ENCODE measurements at regions of chr2 and their contacts with region 1.

Region 1: DNA sequence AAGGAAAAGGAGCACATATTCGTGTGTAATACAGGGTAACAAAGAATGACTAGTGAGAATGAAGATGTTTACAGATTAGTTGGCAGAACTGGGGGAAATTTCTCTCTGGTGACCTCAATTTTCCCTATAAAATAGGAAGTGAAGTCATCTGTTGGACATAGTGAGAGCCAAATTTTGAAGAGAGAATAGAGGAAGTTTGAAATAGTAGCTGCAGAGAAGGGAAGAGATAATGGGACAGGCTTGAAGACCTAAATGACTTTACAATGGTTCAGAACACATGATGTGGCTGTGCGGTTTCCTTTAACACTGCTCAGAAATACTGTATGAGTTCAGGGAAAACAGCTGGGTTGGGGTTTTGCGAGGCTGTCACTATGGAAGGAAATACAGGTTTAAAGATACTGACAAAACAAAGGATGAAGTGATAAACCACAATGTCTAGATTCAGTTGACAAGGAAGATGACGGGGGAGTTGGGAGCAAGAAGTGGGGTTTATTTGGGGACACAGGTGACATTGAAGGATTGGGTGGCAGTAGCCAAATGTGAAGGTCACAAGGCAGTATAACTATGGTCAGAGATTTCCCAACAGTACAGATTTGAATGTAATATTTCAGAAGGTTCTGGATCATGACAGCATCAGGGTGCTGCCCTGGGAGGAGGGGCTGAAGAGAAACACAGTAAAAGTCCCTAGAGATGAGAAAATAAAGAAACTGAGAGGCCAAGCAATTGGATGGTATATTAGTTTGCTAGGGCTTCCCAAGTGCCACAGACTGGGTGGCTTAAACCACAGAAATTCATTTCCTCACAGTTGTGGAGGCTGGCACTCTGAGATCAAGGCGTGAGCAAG is 82.6 kb upstream of the TANK start:
- DNase-seq: peak; percentile 84
- H3K4me3 Mint-ChIP-seq: peak overlapping the region; percentile 6
- H3K27ac Mint-ChIP-seq: peak overlapping the region; percentile 85
- H3K4me1 Mint-ChIP-seq: peaks cover 42% of the 10 kb centered on the region
- H3K27me3 Mint-ChIP-seq: no peaks in the 10 kb centered on the region

Region 2: DNA sequence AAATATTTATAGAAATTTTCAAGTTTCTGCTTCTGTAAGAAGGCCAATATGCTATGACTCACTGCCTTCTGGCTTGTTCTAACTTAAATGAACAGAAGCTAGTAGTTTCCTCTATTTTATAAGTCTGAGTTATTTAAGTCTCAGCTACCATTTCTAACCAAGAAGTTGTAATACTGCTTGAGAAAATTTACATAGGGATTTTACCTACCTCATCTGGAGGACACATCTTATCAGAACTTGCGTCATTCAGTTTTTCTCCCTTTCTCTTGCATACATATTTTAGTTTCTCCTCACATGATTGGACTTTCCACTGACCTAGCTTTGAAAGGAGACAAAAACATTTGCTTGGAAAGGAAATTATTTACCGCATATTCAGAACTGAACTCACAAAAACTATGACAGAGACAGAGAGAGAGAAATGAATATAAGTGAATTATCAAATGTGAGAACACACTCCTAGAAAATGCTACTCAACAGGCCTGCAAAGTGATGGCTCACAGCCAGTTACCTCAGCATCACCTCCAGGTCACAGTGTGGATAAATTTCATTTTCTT is 1198.5 kb before region 1 on chr2:
- CTCF ChIA-PET with region 1: no interaction called
- POLR2A ChIA-PET with region 1: no interaction called
- intact Hi-C with region 1: loop called (anchors 1 kb)
- DNase-seq: peak; percentile 72
- H3K4me3 Mint-ChIP-seq: no peak overlapping the region
- H3K27ac Mint-ChIP-seq: peak overlapping the region; percentile 88
- H3K4me1 Mint-ChIP-seq: peaks cover 61% of the 10 kb centered on the region
- H3K27me3 Mint-ChIP-seq: no peaks in the 10 kb centered on the region

Region 3: DNA sequence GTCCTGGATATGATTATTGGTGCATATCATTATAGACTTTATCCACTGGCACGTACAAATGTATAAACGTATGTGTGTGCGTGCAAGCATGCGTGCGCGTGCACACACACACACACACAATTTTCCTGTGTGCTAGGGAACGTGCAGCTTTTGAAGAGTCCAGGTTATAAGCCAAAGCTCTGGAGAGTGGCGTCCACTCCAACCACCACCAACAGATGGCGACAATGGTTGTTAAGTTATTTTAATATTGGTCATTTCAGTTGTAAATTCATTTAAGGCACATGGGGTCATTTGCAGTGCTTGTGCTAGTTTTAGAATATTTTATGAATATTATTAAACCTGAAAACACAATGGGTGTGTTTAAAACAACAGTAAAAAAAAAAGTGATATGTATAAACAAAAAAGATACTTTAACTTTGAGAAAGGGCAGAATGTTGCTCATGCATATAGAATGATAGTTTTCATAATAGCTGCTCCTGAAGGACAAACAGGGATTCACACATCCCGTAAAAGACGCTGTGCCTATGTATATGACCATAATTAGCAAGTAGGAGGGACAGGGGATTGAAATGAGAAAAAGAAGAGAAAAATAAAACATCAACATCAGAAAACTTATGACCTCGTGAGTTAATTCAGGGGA is 753.3 kb before region 1 on chr2:
- CTCF ChIA-PET with region 1: no interaction called
- POLR2A ChIA-PET with region 1: no interaction called
- intact Hi-C with region 1: loop called (anchors 1 kb)
- DNase-seq: peak; percentile 62
- H3K4me3 Mint-ChIP-seq: no peak overlapping the region
- H3K27ac Mint-ChIP-seq: no peak overlapping the region
- H3K4me1 Mint-ChIP-seq: peaks cover 80% of the 10 kb centered on the region
- H3K27me3 Mint-ChIP-seq: no peaks in the 10 kb centered on the region

Region 4: DNA sequence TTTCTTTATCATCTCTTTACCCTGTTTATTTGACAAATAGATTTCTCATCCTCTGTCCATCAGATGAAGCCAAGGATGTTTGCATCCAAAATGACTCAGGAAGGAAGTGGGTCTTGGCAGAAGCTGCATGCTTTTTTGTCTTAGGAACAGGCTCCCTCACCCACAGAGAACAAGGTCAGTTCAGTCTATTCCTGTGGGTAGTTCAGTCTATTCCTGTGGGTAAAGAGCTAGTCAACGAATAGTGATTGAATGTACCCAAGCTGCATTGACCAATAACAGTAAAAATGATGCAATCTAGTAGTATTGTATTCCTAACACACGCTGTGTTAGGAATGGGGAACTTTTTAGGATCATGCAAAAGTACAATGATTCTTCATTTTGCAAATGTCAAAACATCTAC is 208.2 kb before region 1 on chr2:
- CTCF ChIA-PET with region 1: no interaction called
- POLR2A ChIA-PET with region 1: no interaction called
- intact Hi-C with region 1: no loop called
- DNase-seq: no peak
- H3K4me3 Mint-ChIP-seq: no peak overlapping the region
- H3K27ac Mint-ChIP-seq: no peak overlapping the region
- H3K4me1 Mint-ChIP-seq: no peaks in the 10 kb centered on the region
- H3K27me3 Mint-ChIP-seq: no peaks in the 10 kb centered on the region

Region 5: GRCh38 chr2:161090411-161090810 is 12.8 kb after region 1 on chr2:
- CTCF ChIA-PET with region 1: interaction called, 4 read pairs
- POLR2A ChIA-PET with region 1: interaction called, 3 read pairs
- intact Hi-C with region 1: loop called (anchors 1 kb)
- DNase-seq: peak; percentile 57
- H3K4me3 Mint-ChIP-seq: peak overlapping the region; percentile 48
- H3K27ac Mint-ChIP-seq: peak overlapping the region; percentile 54
- H3K4me1 Mint-ChIP-seq: peaks cover 35% of the 10 kb centered on the region
- H3K27me3 Mint-ChIP-seq: no peaks in the 10 kb centered on the region

Region 6: DNA sequence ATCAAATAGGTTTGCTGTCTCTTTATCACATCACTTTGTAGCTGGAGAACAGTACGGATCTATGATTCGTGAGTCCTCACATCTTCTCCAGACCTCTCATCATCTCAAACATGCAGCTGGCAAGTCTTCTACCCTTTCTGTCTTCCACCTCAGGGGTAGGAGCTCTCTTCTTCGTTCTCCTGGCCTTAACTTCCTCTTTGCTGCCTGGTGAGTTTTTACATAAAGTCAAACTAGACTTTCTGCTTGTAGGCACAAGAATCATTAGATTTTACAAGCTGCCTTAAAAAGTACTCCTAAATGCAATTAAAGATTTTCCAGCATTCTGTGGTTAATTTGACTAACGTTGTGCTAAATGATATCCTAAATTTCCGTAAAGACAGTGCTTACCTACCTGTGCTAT is 38.9 kb after region 1 on chr2:
- CTCF ChIA-PET with region 1: no interaction called
- POLR2A ChIA-PET with region 1: no interaction called
- intact Hi-C with region 1: no loop called
- DNase-seq: no peak
- H3K4me3 Mint-ChIP-seq: no peak overlapping the region
- H3K27ac Mint-ChIP-seq: no peak overlapping the region
- H3K4me1 Mint-ChIP-seq: peaks cover 3% of the 10 kb centered on the region
- H3K27me3 Mint-ChIP-seq: no peaks in the 10 kb centered on the region

Region 7: GRCh38 chr2:161128885-161129284 is 51.3 kb after region 1 on chr2:
- CTCF ChIA-PET with region 1: no interaction called
- POLR2A ChIA-PET with region 1: no interaction called
- intact Hi-C with region 1: no loop called
- DNase-seq: no peak
- H3K4me3 Mint-ChIP-seq: no peak overlapping the region
- H3K27ac Mint-ChIP-seq: no peak overlapping the region
- H3K4me1 Mint-ChIP-seq: peaks cover 21% of the 10 kb centered on the region
- H3K27me3 Mint-ChIP-seq: no peaks in the 10 kb centered on the region

Region 8: DNA sequence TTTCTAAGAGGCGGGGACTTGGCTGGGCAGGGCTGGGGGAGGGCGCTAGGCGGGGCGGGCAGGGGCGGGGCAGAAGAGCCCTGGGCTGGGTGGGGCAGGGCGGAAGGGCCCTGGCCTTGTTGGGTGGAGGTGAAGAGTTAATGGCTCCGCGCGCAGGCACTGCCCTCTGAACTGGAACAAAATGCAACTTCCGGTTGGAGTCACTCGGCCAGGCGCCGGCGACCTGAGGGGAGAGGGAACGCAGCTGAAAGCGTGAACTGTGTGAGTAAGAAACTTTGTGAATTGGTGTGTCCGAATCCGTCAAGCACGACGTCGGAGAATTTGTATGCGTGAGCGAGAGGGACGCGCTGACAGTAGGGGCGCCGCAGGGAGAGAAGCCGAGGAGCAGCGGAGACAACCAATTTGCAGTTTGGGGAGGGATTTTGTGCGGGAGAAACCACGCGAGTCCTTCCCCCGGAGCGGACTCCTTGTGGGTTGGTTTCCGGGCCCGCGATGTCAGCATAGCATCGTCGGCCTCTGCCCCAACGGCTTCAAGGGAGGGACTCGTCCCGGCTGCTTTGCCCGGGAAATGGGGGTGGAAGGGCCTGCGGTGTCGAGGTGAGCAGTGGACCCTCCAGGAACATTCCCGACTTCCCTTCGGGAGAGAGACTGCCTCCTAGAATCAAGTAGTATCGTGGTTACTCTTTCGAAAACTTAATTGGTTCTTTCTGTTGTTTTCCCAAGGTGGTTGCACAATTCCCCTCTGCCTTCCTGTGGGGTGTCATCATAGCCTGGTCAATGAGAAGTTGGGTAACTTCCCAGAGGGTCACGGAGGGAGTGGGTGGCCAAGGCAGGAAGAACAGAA is 82.9 kb after region 1 on chr2 and contains the start of gene TANK:
- CTCF ChIA-PET with region 1: no interaction called
- POLR2A ChIA-PET with region 1: no interaction called
- intact Hi-C with region 1: loop called (anchors 1 kb)
- DNase-seq: peak; percentile 96
- H3K4me3 Mint-ChIP-seq: peak within 1 kb of the TSS; percentile 96
- H3K27ac Mint-ChIP-seq: peak within 1 kb of the TSS; percentile 98
- H3K4me1 Mint-ChIP-seq: peaks cover 55% of the 10 kb centered on the region
- H3K27me3 Mint-ChIP-seq: no peaks in the 10 kb centered on the region
- total RNA-seq, gene TANK: 71.4 to 74.1 TPM

Region 9: GRCh38 chr2:161954103-161954502 is 876.5 kb after region 1 on chr2:
- CTCF ChIA-PET with region 1: no interaction called
- POLR2A ChIA-PET with region 1: no interaction called
- intact Hi-C with region 1: loop called (anchors 2 kb)
- DNase-seq: no peak
- H3K4me3 Mint-ChIP-seq: no peak overlapping the region
- H3K27ac Mint-ChIP-seq: peak overlapping the region; percentile 83
- H3K4me1 Mint-ChIP-seq: peaks cover 56% of the 10 kb centered on the region
- H3K27me3 Mint-ChIP-seq: no peaks in the 10 kb centered on the region